ENCODE measurements at regions of chr6 and their contacts with region 1.

Region 1: GRCh38 chr6:142926494-142927270 is 18.3 kb downstream of the HIVEP2 start:
- DNase-seq: peak; percentile 92
- ATAC-seq: peak; percentile 92
- H3K4me3 Mint-ChIP-seq: peak overlapping the region; percentile 84
- H3K27ac Mint-ChIP-seq: peak overlapping the region; percentile 97
- H3K4me1 Mint-ChIP-seq: peaks cover 38% of the 10 kb centered on the region
- H3K27me3 Mint-ChIP-seq: no peaks in the 10 kb centered on the region

Region 2: GRCh38 chr6:142913511-142914047 is 13.1 kb before region 1 on chr6:
- CTCF ChIA-PET with region 1: interaction called, 11 read pairs
- DNase-seq: peak; percentile 89
- ATAC-seq: peak; percentile 91
- H3K4me3 Mint-ChIP-seq: peak overlapping the region; percentile 73
- H3K27ac Mint-ChIP-seq: peak overlapping the region; percentile 99
- H3K4me1 Mint-ChIP-seq: peaks cover 69% of the 10 kb centered on the region
- H3K27me3 Mint-ChIP-seq: no peaks in the 10 kb centered on the region

Region 3: GRCh38 chr6:143034689-143035334 is 108.1 kb after region 1 on chr6:
- CTCF ChIA-PET with region 1: no interaction called
- DNase-seq: no peak
- ATAC-seq: no peak
- H3K4me3 Mint-ChIP-seq: no peak overlapping the region
- H3K27ac Mint-ChIP-seq: no peak overlapping the region
- H3K4me1 Mint-ChIP-seq: peaks cover 8% of the 10 kb centered on the region
- H3K27me3 Mint-ChIP-seq: peaks cover 25% of the 10 kb centered on the region

Measured in activated CD8-positive, alpha-beta memory T cell treated with anti-CD3 and anti-CD28 coated beads, Interleukin-2, amount 10 ng/mL, durations not matched to agents 7 days and 5 days (primary cell).